Activated CD4-positive, alpha-beta memory T cell treated with anti-CD3 and anti-CD28 coated beads, Interleukin-2, amount 10 ng/mL, durations not matched to agents 7 days and 5 days (primary cell): ENCODE measurements at regions of chr1 and their contacts with region 1.

Region 1: DNA sequence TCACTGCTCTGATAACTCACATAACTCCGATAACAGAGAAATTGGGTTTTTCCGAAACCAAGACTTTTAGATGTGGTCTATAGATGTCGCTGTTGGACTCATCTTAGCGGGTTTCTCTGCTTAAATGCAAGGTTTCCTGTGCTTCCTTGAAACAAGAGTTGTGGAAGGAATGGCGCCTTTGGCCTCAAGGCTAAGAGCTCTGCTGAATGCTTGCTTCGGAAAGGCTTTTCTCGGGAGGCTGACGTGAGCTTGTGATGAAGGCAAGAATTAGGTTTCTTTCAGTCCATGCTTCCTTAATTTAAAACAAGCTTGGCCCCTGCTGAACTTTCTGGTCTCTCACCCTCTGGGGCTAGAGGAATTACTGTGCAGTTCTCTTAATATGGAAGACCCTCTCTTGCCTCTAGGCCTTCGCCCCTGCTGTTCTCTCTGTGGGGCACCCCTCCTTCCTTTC is 113.5 kb downstream of the MAP3K21 start:
- DNase-seq: no peak
- H3K4me3 Mint-ChIP-seq: no peak overlapping the region
- H3K27ac Mint-ChIP-seq: no peak overlapping the region
- H3K4me1 Mint-ChIP-seq: no peaks in the 10 kb centered on the region
- H3K27me3 Mint-ChIP-seq: peaks cover 15% of the 10 kb centered on the region

Region 2: GRCh38 chr1:233790662-233791375 is 349.8 kb after region 1 on chr1:
- CTCF ChIA-PET with region 1: interaction called, 24 read pairs
- POLR2A ChIA-PET with region 1: interaction called, 4 read pairs
- DNase-seq: peak; percentile 28
- H3K4me3 Mint-ChIP-seq: no peak overlapping the region
- H3K27ac Mint-ChIP-seq: no peak overlapping the region
- H3K4me1 Mint-ChIP-seq: no peaks in the 10 kb centered on the region
- H3K27me3 Mint-ChIP-seq: peaks cover 12% of the 10 kb centered on the region

Region 3: GRCh38 chr1:234065794-234066447 is 624.9 kb after region 1 on chr1:
- CTCF ChIA-PET with region 1: interaction called, 31 read pairs
- POLR2A ChIA-PET with region 1: no interaction called
- DNase-seq: peak; percentile 65
- H3K4me3 Mint-ChIP-seq: no peak overlapping the region
- H3K27ac Mint-ChIP-seq: no peak overlapping the region
- H3K4me1 Mint-ChIP-seq: no peaks in the 10 kb centered on the region
- H3K27me3 Mint-ChIP-seq: no peaks in the 10 kb centered on the region